ENCODE measurements at regions of chr9 and their contacts with region 1.

Region 1: DNA sequence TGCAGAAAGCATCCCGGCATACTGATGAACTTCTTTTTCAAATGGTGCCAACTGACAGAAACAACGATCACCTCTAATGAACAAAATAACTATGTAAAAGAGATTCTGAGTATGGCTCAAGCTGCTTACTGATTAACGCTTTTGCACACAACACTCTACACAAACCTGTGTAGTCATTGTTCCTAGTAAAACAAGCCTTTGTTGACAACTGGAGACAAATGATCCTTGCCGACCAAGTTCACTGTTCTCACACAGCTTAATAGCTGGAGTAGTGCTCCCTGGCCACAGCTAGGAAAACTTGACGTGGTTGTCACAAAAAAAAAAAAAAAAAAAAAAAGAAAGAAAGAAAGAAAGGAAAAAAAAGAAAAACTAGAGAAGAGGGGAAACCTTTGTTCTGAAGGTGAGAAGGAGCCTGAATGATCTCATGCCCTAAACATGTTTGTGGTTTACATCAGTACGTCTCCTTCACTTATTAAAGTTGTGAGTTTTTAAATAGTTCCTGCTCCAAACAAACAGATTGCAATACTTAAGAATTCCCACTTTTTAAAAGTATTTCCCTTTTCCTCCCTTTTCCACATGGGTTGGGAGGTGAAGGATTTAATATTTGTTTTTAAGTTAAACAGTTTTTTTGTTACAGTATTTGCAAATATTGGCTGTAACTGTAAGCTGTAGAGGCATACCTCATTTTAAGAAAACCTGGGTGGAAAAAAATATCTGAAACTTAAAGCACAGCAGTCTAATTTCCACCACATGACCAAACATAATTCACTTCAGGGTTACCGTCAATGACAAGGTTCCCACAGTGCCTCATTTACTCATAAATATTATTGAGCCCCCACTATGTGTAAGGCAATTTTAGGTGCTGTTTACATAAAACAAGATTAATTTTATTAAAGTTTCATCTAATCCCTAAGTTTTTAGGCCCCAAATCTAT is 63.7 kb downstream of the GLIS3 start:
- DNase-seq: no peak
- ATAC-seq: peak in 2 of 8 donors; percentile 37 to 42
- H3K4me3 ChIP-seq: no peak overlapping the region
- H3K27ac ChIP-seq: peak overlapping the region in 4 of 10 donors; percentile 9 to 54 (median 30)
- H3K4me1 ChIP-seq: peaks cover 0 to 25% (median 6%) of the 10 kb centered on the region in 9 donors
- H3K27me3 ChIP-seq: no peaks in the 10 kb centered on the region
- CTCF ChIP-seq: no peak

Region 2: DNA sequence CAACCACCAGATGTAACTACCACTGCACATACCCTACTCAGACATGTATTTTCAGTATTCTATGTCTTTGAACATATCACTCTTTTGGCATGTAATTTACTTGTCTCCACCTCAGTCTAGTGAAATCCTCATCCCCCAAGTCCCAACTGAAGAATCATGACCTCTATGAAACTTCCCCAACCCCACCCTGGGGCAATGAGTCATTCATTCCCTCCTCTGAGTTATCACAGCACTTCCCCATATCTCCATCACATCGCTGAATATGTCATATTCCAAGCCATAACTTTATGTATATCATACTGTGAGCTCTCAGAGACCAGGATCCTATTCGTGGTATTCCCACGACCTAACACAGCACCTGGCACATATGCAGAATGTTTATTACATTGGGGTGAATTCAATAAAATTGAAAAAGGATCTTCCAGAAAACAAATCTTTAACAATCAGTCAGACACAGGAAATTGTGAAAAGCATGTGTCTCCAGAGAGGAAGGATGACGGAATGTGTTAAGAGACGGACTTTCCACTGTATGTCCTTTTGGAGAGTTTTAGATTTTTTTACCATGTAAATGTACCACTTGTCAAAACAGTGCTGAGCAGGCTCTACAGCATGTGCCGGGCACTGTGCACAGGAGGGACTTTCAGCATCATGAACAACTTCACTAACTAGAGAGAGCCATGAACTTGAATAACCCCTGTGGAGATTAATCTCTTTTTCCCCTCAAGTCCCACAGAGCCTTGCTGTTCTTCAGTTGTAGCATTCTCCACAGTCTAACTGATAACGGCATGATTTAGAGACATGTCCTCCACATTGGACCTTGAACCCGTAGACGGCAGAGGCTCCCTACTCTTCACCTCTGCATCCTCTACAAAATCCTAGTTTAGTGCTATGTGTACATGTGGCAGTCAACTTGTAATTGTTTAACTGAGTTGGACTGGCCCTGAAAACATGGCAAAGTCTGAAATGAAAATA is 149.7 kb before region 1 on chr9:
- intact Hi-C with region 1: loop called in 1 of 10 experiments (anchors 10 kb)
- DNase-seq: peak in 1 of 2 donors; percentile 26
- ATAC-seq: peak; percentile 43 to 77 (median 60)
- H3K4me3 ChIP-seq: no peak overlapping the region
- H3K27ac ChIP-seq: peak overlapping the region in 9 of 10 donors; percentile 21 to 67 (median 45)
- H3K4me1 ChIP-seq: peaks cover 0 to 32% (median 5%) of the 10 kb centered on the region in 9 donors
- H3K27me3 ChIP-seq: no peaks in the 10 kb centered on the region
- CTCF ChIP-seq: no peak

Region 3: GRCh38 chr9:4289411-4290380 is 53.6 kb after region 1 on chr9:
- intact Hi-C with region 1: loop called in 1 of 10 experiments (anchors 5 kb)
- DNase-seq: no peak
- ATAC-seq: no peak
- H3K4me3 ChIP-seq: no peak overlapping the region
- H3K27ac ChIP-seq: no peak overlapping the region
- H3K4me1 ChIP-seq: peaks cover 0 to 13% (median 0%) of the 10 kb centered on the region in 9 donors
- H3K27me3 ChIP-seq: no peaks in the 10 kb centered on the region
- CTCF ChIP-seq: no peak

Region 4: GRCh38 chr9:4297151-4297785 is 61.1 kb after region 1 on chr9:
- intact Hi-C with region 1: loop called in 2 of 10 experiments (anchors 5 kb)
- DNase-seq: peak; percentile 58 to 74
- ATAC-seq: peak; percentile 24 to 76 (median 57)
- H3K4me3 ChIP-seq: peak overlapping the region; percentile 58 to 79 (median 75)
- H3K27ac ChIP-seq: peak overlapping the region; percentile 55 to 93 (median 82)
- H3K4me1 ChIP-seq: peaks cover 0 to 60% (median 10%) of the 10 kb centered on the region in 9 donors
- H3K27me3 ChIP-seq: peaks cover 0 to 27% (median 0%) of the 10 kb centered on the region in 7 donors
- CTCF ChIP-seq: peak in 8 of 9 donors; percentile 8 to 63 (median 44)

Measured in heart right ventricle (tissue), 16 donors.